CD8-positive, alpha-beta T cell (primary cell): ENCODE measurements at regions of chr12 and their contacts with region 1.

Region 1: DNA sequence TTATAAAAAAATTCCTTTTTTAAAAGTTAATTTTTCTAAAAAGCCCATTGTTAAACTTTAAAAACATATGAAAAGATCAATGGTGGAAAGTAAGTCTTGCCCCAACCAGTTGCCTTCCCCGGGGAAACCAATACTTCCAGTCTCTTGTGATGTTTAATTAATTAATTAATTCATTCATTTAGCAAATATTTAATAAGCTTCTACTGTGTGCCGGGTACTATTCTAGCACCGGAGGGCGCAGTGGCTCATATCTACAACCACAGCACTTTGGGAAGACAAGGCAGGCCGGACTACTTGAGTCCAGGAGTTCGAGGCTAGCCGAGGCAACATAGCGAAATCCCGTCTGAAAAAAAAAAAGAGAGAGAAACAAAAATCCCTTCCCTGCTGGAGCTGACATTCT is 87.4 kb downstream of the HECTD4 start:
- DNase-seq: peak in 2 of 9 experiments; percentile 12 to 16
- ATAC-seq: no peak
- H3K4me3 ChIP-seq: no peak overlapping the region
- H3K4me3 Mint-ChIP-seq: no peak overlapping the region
- H3K27ac ChIP-seq: no peak overlapping the region
- H3K27ac Mint-ChIP-seq: no peak overlapping the region
- H3K4me1 ChIP-seq: no peaks in the 10 kb centered on the region
- H3K4me1 Mint-ChIP-seq: peaks cover 2% of the 10 kb centered on the region
- H3K27me3 ChIP-seq: no peaks in the 10 kb centered on the region
- H3K27me3 Mint-ChIP-seq: no peaks in the 10 kb centered on the region
- CTCF ChIP-seq: no peak

Region 2: GRCh38 chr12:112261559-112261958 is 33.2 kb before region 1 on chr12:
- CTCF ChIA-PET with region 1: no interaction called
- POLR2A ChIA-PET with region 1: no interaction called
- intact Hi-C with region 1: no loop called
- DNase-seq: no peak
- ATAC-seq: no peak
- H3K4me3 ChIP-seq: no peak overlapping the region
- H3K4me3 Mint-ChIP-seq: no peak overlapping the region
- H3K27ac ChIP-seq: no peak overlapping the region
- H3K27ac Mint-ChIP-seq: no peak overlapping the region
- H3K4me1 ChIP-seq: no peaks in the 10 kb centered on the region
- H3K4me1 Mint-ChIP-seq: no peaks in the 10 kb centered on the region
- H3K27me3 ChIP-seq: no peaks in the 10 kb centered on the region
- H3K27me3 Mint-ChIP-seq: no peaks in the 10 kb centered on the region
- CTCF ChIP-seq: no peak

Region 3: GRCh38 chr12:112322882-112323547 is 28.2 kb after region 1 on chr12:
- CTCF ChIA-PET with region 1: no interaction called
- POLR2A ChIA-PET with region 1: no interaction called
- intact Hi-C with region 1: loop called in 1 of 2 experiments (anchors 1 kb)
- DNase-seq: no peak
- ATAC-seq: no peak
- H3K4me3 ChIP-seq: no peak overlapping the region
- H3K4me3 Mint-ChIP-seq: no peak overlapping the region
- H3K27ac ChIP-seq: no peak overlapping the region
- H3K27ac Mint-ChIP-seq: no peak overlapping the region
- H3K4me1 ChIP-seq: no peaks in the 10 kb centered on the region
- H3K4me1 Mint-ChIP-seq: peaks cover 27% of the 10 kb centered on the region
- H3K27me3 ChIP-seq: no peaks in the 10 kb centered on the region
- H3K27me3 Mint-ChIP-seq: no peaks in the 10 kb centered on the region
- CTCF ChIP-seq: no peak

Region 4: GRCh38 chr12:113056631-113057488 is 762.1 kb after region 1 on chr12 and contains the start of gene DTX1:
- CTCF ChIA-PET with region 1: no interaction called
- POLR2A ChIA-PET with region 1: no interaction called
- intact Hi-C with region 1: no loop called
- DNase-seq: peak in 6 of 9 experiments; percentile 20 to 57 (median 42)
- ATAC-seq: peak; percentile 75
- H3K4me3 ChIP-seq: peak within 1 kb of the TSS; percentile 52 to 57
- H3K4me3 Mint-ChIP-seq: peak within 1 kb of the TSS; percentile 83
- H3K27ac ChIP-seq: no peak within 1 kb of the TSS
- H3K27ac Mint-ChIP-seq: peak within 1 kb of the TSS; percentile 57
- H3K4me1 ChIP-seq: peaks cover 23% of the 10 kb centered on the region
- H3K4me1 Mint-ChIP-seq: peaks cover 27% of the 10 kb centered on the region
- H3K27me3 ChIP-seq: no peaks in the 10 kb centered on the region
- H3K27me3 Mint-ChIP-seq: no peaks in the 10 kb centered on the region
- CTCF ChIP-seq: no peak
- total RNA-seq, gene DTX1: 4.6 to 4.7 TPM